HepG2 (cell line): ENCODE measurements at regions of chr5 and their contacts with region 1.

Region 1: GRCh38 chr5:136364307-136364706 is 1.0 kb downstream of the TRPC7 start:
- DNase-seq: no peak
- ATAC-seq: no peak
- H3K4me3 ChIP-seq: no peak overlapping the region
- H3K27ac ChIP-seq: no peak overlapping the region
- H3K4me1 ChIP-seq: no peaks in the 10 kb centered on the region
- H3K27me3 ChIP-seq: no peaks in the 10 kb centered on the region
- CTCF ChIP-seq: peak; percentile 16; the same call in 1 of the 2 replicates
- EP300 ChIP-seq: no peak
- POLR2A ChIP-seq: no peak
- RAD21 ChIP-seq: no peak

Region 2: DNA sequence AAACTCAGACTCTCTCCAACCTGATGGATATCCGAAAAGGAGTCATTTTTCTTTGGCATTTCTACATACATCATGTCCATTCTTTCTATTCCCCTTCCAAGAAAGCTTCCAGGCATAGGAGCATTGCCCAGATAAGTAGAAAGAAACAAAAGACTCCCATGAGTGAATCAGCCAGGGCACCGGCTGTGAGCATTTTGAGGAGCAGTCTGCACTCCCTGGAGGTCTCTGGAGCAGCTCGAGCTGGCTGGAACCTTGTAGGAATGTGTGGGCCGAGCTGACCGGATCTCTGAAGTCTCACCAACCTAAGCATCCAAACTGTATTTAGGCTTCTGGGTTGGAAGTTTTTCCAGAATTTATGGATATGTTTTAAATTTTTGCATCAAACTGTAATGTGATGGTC is 162.5 kb after region 1 on chr5:
- CTCF ChIA-PET with region 1: no interaction called
- POLR2A ChIA-PET with region 1: no interaction called
- in situ Hi-C with region 1: no loop called
- intact Hi-C with region 1: no loop called
- DNase-seq: no peak
- ATAC-seq: no peak
- H3K4me3 ChIP-seq: no peak overlapping the region
- H3K27ac ChIP-seq: no peak overlapping the region
- H3K4me1 ChIP-seq: no peaks in the 10 kb centered on the region
- H3K27me3 ChIP-seq: no peaks in the 10 kb centered on the region
- CTCF ChIP-seq: no peak
- EP300 ChIP-seq: no peak
- POLR2A ChIP-seq: no peak
- RAD21 ChIP-seq: no peak

Region 3: DNA sequence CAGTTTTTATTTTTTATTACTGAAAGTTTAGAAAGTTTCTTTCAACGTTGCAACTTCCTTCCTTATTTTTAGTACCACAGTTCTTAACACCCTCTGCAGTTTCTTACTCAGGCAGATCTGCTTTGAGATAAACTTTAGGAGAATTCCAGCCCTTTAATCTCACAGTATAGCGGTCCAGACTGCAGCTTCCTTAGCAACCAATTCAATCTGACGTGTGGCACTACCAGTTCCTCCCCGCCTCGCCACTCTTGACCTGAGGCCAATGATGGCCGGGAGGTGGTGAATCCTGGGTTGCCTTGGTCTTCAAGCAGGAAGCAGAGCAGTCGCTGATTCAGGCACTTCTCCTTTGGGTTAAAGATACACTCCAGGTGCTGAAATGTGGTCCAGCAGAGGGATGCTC is 335.3 kb after region 1 on chr5:
- CTCF ChIA-PET with region 1: no interaction called
- POLR2A ChIA-PET with region 1: no interaction called
- in situ Hi-C with region 1: no loop called
- intact Hi-C with region 1: loop called (anchors 10 kb)
- DNase-seq: no peak
- ATAC-seq: no peak
- H3K4me3 ChIP-seq: no peak overlapping the region
- H3K27ac ChIP-seq: no peak overlapping the region
- H3K4me1 ChIP-seq: no peaks in the 10 kb centered on the region
- H3K27me3 ChIP-seq: no peaks in the 10 kb centered on the region; a peak in 1 of 5 replicates
- CTCF ChIP-seq: no peak
- EP300 ChIP-seq: no peak
- POLR2A ChIP-seq: no peak
- RAD21 ChIP-seq: no peak